GM12878 (cell line): ENCODE measurements at regions of chr14 and their contacts with region 1.

Region 1: GRCh38 chr14:75452900-75453747 is 25.3 kb downstream of the JDP2 start:
- DNase-seq: no peak
- ATAC-seq: no peak
- H3K4me3 ChIP-seq: no peak overlapping the region
- H3K27ac ChIP-seq: peak overlapping the region; percentile 59
- H3K4me1 ChIP-seq: peaks cover 30% of the 10 kb centered on the region
- H3K27me3 ChIP-seq: no peaks in the 10 kb centered on the region
- CTCF ChIP-seq: no peak
- EP300 ChIP-seq: no peak
- POLR2A ChIP-seq: no peak
- RAD21 ChIP-seq: no peak

Region 2: GRCh38 chr14:75315144-75315543 is 138.0 kb before region 1 on chr14:
- CTCF ChIA-PET with region 1: interaction called, 240 read pairs
- POLR2A ChIA-PET with region 1: no interaction called
- RAD21 ChIA-PET with region 1: interaction called, 53 read pairs
- SMC1A ChIA-PET with region 1: interaction called, 63 read pairs
- in situ Hi-C with region 1: no loop called
- intact Hi-C with region 1: no loop called
- DNase-seq: no peak
- ATAC-seq: no peak
- H3K4me3 ChIP-seq: no peak overlapping the region
- H3K27ac ChIP-seq: no peak overlapping the region
- H3K4me1 ChIP-seq: no peaks in the 10 kb centered on the region
- H3K27me3 ChIP-seq: no peaks in the 10 kb centered on the region; a peak in 1 of 4 replicates
- CTCF ChIP-seq: no peak
- EP300 ChIP-seq: no peak
- POLR2A ChIP-seq: no peak
- RAD21 ChIP-seq: no peak

Region 3: DNA sequence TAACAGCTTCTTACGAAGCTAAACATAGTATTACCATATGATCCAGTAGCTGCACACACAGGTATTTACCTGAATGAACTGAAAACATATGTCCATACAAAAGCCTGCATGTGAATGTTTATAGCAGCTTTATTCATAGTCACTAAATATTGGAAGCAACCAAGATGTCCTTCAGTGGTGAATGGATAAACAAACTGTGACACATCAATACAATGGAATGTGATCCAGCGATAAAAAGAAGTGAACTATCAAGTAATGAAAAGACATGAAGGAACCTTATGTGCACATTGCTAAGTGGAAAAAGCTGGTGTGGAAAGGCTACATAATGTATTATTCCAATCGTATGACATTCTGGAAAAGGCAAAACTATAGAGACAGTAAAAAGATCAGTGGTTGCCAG is 63.4 kb before region 1 on chr14:
- CTCF ChIA-PET with region 1: interaction called, 3 read pairs
- POLR2A ChIA-PET with region 1: no interaction called
- RAD21 ChIA-PET with region 1: interaction called, 3 read pairs
- SMC1A ChIA-PET with region 1: interaction called, 10 read pairs
- in situ Hi-C with region 1: no loop called
- intact Hi-C with region 1: no loop called
- DNase-seq: no peak
- ATAC-seq: no peak
- H3K4me3 ChIP-seq: no peak overlapping the region
- H3K27ac ChIP-seq: no peak overlapping the region
- H3K4me1 ChIP-seq: no peaks in the 10 kb centered on the region
- H3K27me3 ChIP-seq: no peaks in the 10 kb centered on the region
- CTCF ChIP-seq: no peak
- EP300 ChIP-seq: no peak
- POLR2A ChIP-seq: no peak
- RAD21 ChIP-seq: no peak

Region 4: DNA sequence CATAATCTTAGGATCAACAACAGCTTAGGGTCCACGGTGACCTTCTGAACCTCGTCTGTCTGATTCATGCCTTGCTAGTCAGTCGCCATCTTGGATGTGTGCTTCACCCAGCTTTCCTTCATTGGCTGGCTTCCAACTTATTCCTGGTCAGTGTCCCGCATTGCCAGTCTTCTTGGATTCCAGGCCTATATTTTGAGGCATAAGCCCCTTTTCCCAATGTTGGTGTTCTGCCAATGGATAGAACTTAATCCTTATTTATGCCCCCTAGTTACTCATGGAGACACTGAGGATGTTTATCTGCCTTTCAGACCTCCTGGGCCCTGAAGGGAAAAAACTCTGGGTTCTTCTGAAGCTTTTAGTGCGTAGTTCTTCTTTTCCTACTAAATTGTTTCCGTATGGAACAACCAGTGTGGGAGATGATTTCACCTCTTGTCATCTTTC is 19.5 kb before region 1 on chr14:
- CTCF ChIA-PET with region 1: interaction called, 15 read pairs
- POLR2A ChIA-PET with region 1: interaction called, 4 read pairs
- RAD21 ChIA-PET with region 1: interaction called, 23 read pairs
- SMC1A ChIA-PET with region 1: interaction called, 20 read pairs
- in situ Hi-C with region 1: no loop called
- intact Hi-C with region 1: no loop called
- DNase-seq: no peak
- ATAC-seq: no peak
- H3K4me3 ChIP-seq: no peak overlapping the region
- H3K27ac ChIP-seq: no peak overlapping the region
- H3K4me1 ChIP-seq: peaks cover 44% of the 10 kb centered on the region
- H3K27me3 ChIP-seq: no peaks in the 10 kb centered on the region
- CTCF ChIP-seq: no peak
- EP300 ChIP-seq: no peak
- POLR2A ChIP-seq: no peak
- RAD21 ChIP-seq: no peak

Region 5: DNA sequence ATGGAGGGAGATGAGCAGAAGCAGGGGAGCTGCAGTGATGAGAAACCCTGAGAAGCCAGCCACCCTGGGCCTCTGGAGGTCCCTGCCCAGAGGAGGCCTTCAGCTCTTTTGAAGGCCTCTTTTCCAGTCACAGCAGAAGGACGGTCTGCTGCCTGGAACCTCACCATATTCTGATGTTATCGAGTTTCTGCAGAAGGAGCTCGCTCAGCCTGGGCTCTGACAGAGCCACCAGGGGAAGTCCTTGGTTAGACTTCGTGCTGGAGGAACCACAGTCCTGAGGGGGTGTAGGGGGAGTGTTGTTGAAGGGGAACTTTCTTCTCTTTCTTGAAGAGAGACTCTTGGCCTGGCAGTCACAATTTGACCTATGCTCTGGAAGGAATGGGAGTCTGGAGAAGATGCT is 44.1 kb after region 1 on chr14:
- CTCF ChIA-PET with region 1: interaction called, 82 read pairs
- POLR2A ChIA-PET with region 1: no interaction called
- RAD21 ChIA-PET with region 1: interaction called, 11 read pairs
- SMC1A ChIA-PET with region 1: interaction called, 8 read pairs
- in situ Hi-C with region 1: no loop called
- intact Hi-C with region 1: no loop called
- DNase-seq: no peak
- ATAC-seq: peak; percentile 43
- H3K4me3 ChIP-seq: no peak overlapping the region
- H3K27ac ChIP-seq: peak overlapping the region; percentile 54
- H3K4me1 ChIP-seq: peaks cover 65% of the 10 kb centered on the region
- H3K27me3 ChIP-seq: no peaks in the 10 kb centered on the region
- CTCF ChIP-seq: no peak
- EP300 ChIP-seq: 0 out of 4 replicates have a peak, but pooled peaks of 1 of the 2 experiments have one; percentile 25
- POLR2A ChIP-seq: no peak
- RAD21 ChIP-seq: peak; percentile 41

Region 6: GRCh38 chr14:75636100-75636692 is 183.1 kb after region 1 on chr14:
- CTCF ChIA-PET with region 1: no interaction called
- POLR2A ChIA-PET with region 1: no interaction called
- RAD21 ChIA-PET with region 1: no interaction called
- SMC1A ChIA-PET with region 1: no interaction called
- in situ Hi-C with region 1: no loop called
- intact Hi-C with region 1: no loop called
- DNase-seq: no peak
- ATAC-seq: no peak
- H3K4me3 ChIP-seq: no peak overlapping the region
- H3K27ac ChIP-seq: no peak overlapping the region
- H3K4me1 ChIP-seq: no peaks in the 10 kb centered on the region
- H3K27me3 ChIP-seq: no peaks in the 10 kb centered on the region
- CTCF ChIP-seq: no peak
- EP300 ChIP-seq: no peak
- POLR2A ChIP-seq: no peak
- RAD21 ChIP-seq: no peak